Mucosa of descending colon (tissue), 3 donors: ENCODE measurements at regions of chr3 and their contacts with region 1.

Region 1: DNA sequence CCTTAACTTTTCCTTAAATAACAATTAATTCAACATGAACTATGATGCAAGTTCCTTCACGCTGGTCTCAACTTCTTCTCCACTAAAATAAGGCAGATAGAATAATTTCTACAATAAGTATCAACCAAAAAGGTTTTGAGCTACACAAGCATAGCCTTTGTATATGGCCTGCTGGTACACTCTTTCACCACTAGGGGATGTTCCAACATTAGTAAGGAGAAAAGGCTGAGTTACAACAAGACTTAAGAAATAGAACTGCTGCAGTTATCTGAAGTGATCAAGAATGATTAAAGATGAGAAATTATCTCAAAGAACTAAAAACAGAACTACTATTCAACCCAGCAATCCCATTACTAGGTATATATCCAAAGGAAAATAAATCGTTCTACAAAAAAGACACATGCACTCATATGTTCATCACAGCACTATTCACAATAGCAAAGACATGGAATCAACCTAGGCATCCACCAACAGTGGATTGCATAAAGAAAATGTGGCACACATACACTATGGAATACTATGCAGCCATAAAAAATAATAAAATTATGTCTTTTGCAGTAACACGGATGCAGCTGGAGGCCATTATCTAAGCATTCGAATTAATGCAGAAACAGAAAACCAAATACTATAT is 14.4 kb downstream of the ATP13A3 start:
- DNase-seq: peak in 1 of 3 donors; percentile 64
- ATAC-seq: peak; percentile 84
- H3K4me3 ChIP-seq: no peak overlapping the region
- H3K4me1 ChIP-seq: peaks cover 15% of the 10 kb centered on the region
- CTCF ChIP-seq: peak; percentile 86

Region 2: GRCh38 chr3:194158922-194159439 is 313.4 kb before region 1 on chr3:
- intact Hi-C with region 1: no loop called
- DNase-seq: no peak
- ATAC-seq: peak; percentile 80
- H3K4me3 ChIP-seq: no peak overlapping the region
- H3K4me1 ChIP-seq: peaks cover 13% of the 10 kb centered on the region
- CTCF ChIP-seq: no peak

Region 3: DNA sequence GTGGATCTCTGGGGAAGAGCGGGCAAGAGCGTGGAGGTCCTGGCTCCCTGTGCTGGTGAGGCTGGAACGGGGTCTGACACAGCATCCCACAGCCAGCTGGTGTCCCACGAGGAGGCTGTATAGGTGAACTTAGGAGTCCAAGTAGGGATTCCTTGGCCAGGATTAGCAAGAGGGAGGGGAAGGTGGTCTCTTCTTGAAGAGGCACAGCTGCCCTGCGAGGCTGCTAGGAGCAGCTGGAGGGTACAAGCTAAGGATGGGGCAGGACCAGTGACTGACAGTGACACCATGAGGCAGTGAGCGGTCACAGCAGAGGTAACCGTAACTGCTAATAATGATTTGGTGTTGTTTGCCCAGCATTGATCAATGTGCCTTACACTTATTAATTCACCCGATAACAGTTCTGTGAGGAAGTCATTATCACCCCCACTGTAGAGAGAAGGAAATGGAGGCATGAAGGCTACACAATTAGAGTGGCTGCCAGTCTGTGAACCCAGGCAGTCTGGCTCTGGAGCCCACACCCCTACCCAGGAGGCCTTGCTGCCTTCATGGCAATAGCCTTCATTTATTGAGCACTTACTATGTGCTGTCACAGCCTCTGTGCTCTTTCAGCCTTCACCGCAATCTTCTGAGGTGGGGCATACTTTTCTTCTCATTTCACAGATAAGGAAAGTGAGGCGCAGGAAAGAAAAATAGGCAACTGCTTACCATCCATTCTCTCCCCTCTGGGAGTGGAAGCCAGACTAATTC is 101.5 kb after region 1 on chr3:
- intact Hi-C with region 1: loop called in 1 of 2 experiments (anchors 5 kb)
- DNase-seq: peak in 2 of 3 donors; percentile 57
- ATAC-seq: peak; percentile 79
- H3K4me3 ChIP-seq: no peak overlapping the region
- H3K4me1 ChIP-seq: no peaks in the 10 kb centered on the region
- CTCF ChIP-seq: peak; percentile 29

Region 4: GRCh38 chr3:194586836-194587235 is 114.4 kb after region 1 on chr3:
- intact Hi-C with region 1: loop called in 1 of 2 experiments (anchors 5 kb)
- DNase-seq: no peak
- ATAC-seq: no peak
- H3K4me3 ChIP-seq: no peak overlapping the region
- H3K4me1 ChIP-seq: peaks cover 3% of the 10 kb centered on the region
- CTCF ChIP-seq: no peak